ENCODE measurements at regions of chr2 and their contacts with region 1.

Region 1: GRCh38 chr2:191165176-191165643 is 14.4 kb upstream of the STAT4 start:
- DNase-seq: peak; percentile 80
- ATAC-seq: peak; percentile 12; the same call in 1 of the 2 replicates
- H3K4me3 ChIP-seq: no peak overlapping the region
- H3K27ac ChIP-seq: peak overlapping the region; percentile 90; the same call in 1 of the 2 replicates
- H3K4me1 ChIP-seq: peaks cover 51% of the 10 kb centered on the region
- H3K27me3 ChIP-seq: no peaks in the 10 kb centered on the region
- CTCF ChIP-seq: peak; percentile 94

Region 2: GRCh38 chr2:191109888-191110287 is 55.3 kb before region 1 on chr2:
- CTCF ChIA-PET with region 1: no interaction called
- POLR2A ChIA-PET with region 1: no interaction called
- intact Hi-C with region 1: no loop called
- DNase-seq: no peak
- ATAC-seq: no peak
- H3K4me3 ChIP-seq: no peak overlapping the region
- H3K27ac ChIP-seq: no peak overlapping the region
- H3K4me1 ChIP-seq: no peaks in the 10 kb centered on the region
- H3K27me3 ChIP-seq: no peaks in the 10 kb centered on the region
- CTCF ChIP-seq: no peak

Region 3: DNA sequence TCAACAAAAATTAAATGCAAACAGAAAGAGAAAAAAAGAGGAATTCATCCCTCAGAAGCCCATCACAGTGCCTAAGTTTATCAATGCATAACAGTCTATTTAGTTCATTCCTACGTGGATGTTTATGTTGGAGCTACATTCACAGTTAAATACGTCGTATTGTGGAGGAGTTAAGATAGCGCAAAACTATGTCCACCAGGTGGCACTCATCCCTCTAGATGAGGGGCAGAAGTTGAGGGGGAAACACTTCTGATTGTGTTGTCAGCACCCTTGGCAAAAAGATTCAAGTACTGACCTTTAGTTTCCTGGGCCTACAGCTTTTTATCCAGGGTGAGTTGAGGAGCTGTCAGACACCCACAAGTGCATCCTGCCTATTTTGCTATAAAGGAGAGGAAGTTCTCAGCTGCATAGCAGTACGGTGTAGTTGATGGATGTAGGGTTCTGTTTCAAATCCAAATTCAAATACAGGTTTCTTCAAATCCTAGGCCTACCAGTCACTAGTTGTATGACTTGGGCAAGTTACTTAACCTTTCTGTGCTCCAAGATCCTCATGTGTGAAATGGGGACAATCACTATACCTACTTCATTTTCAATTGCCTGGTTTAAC is 53.2 kb after region 1 on chr2:
- CTCF ChIA-PET with region 1: interaction called, 5 read pairs
- POLR2A ChIA-PET with region 1: interaction called, 10 read pairs
- intact Hi-C with region 1: loop called (anchors 1 kb)
- DNase-seq: peak; percentile 85
- ATAC-seq: peak; percentile 17; the same call in 1 of the 2 replicates
- H3K4me3 ChIP-seq: peak overlapping the region; percentile 15; the same call in 1 of the 2 replicates
- H3K27ac ChIP-seq: peak overlapping the region; percentile 84
- H3K4me1 ChIP-seq: peaks cover 49% of the 10 kb centered on the region
- H3K27me3 ChIP-seq: no peaks in the 10 kb centered on the region
- CTCF ChIP-seq: peak; percentile 88

Region 4: DNA sequence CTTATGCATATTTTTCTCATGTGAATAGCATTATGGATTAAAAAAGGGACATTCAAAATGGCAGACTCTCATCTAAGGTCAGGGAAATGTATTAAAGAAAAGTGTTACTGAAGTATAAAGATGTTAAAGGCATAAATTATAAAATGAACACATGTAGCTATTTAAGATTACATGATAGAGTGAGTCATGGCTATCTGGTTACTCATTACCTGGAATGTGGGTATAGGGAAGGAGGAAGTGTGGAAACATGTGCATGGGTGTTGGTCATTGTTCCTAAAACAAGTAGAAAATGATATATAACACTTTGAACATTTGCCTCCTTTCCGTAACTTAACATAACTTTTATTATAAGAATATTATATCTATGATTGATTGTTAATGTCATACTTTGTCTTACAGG is 146.4 kb after region 1 on chr2:
- CTCF ChIA-PET with region 1: no interaction called
- POLR2A ChIA-PET with region 1: no interaction called
- intact Hi-C with region 1: loop called (anchors 5 kb)
- DNase-seq: peak; percentile 86
- ATAC-seq: peak; percentile 93
- H3K4me3 ChIP-seq: no peak overlapping the region
- H3K27ac ChIP-seq: peak overlapping the region; percentile 25
- H3K4me1 ChIP-seq: peaks cover 25% of the 10 kb centered on the region
- H3K27me3 ChIP-seq: no peaks in the 10 kb centered on the region
- CTCF ChIP-seq: no peak

Region 5: DNA sequence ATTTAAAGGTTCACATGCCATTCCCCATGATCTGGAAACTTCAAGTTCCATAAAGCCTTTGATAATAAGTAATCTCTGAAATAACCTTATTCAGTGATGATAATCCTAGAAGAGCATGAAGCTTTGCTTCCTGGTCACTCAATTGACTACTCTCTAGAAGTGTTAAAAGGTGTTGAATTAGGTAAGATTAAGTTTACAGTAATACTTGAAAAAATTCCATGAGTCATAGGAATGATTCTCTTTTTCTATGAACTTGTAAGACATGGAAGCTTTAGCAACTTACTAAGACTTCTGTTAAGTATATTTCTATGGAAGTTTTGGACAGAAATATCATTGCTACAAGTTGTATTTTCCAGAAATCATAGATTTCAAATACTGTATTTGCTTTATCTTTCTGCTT is 180.6 kb after region 1 on chr2:
- CTCF ChIA-PET with region 1: no interaction called
- POLR2A ChIA-PET with region 1: no interaction called
- intact Hi-C with region 1: no loop called
- DNase-seq: peak; percentile 50
- ATAC-seq: peak; percentile 38; the same call in 1 of the 2 replicates
- H3K4me3 ChIP-seq: no peak overlapping the region
- H3K27ac ChIP-seq: no peak overlapping the region
- H3K4me1 ChIP-seq: peaks cover 8% of the 10 kb centered on the region; the same call in 1 of the 2 replicates
- H3K27me3 ChIP-seq: no peaks in the 10 kb centered on the region
- CTCF ChIP-seq: no peak

Region 6: GRCh38 chr2:191382801-191383200 is 217.6 kb after region 1 on chr2:
- CTCF ChIA-PET with region 1: no interaction called
- POLR2A ChIA-PET with region 1: no interaction called
- intact Hi-C with region 1: loop called (anchors 1 kb)
- DNase-seq: peak; percentile 95
- ATAC-seq: peak; percentile 83
- H3K4me3 ChIP-seq: no peak overlapping the region
- H3K27ac ChIP-seq: peak overlapping the region; percentile 73
- H3K4me1 ChIP-seq: peaks cover 43% of the 10 kb centered on the region
- H3K27me3 ChIP-seq: no peaks in the 10 kb centered on the region
- CTCF ChIP-seq: no peak

Region 7: GRCh38 chr2:191410646-191411436 is 245.6 kb after region 1 on chr2:
- CTCF ChIA-PET with region 1: no interaction called
- POLR2A ChIA-PET with region 1: interaction called, 5 read pairs
- intact Hi-C with region 1: loop called (anchors 2 kb)
- DNase-seq: peak; percentile 14
- ATAC-seq: peak; percentile 78
- H3K4me3 ChIP-seq: no peak overlapping the region
- H3K27ac ChIP-seq: peak overlapping the region; percentile 53
- H3K4me1 ChIP-seq: peaks cover 10% of the 10 kb centered on the region
- H3K27me3 ChIP-seq: no peaks in the 10 kb centered on the region
- CTCF ChIP-seq: no peak

Region 8: GRCh38 chr2:191521608-191522208 is 356.5 kb after region 1 on chr2:
- CTCF ChIA-PET with region 1: interaction called, 6 read pairs
- POLR2A ChIA-PET with region 1: no interaction called
- intact Hi-C with region 1: loop called (anchors 1 kb)
- DNase-seq: peak; percentile 65
- ATAC-seq: no peak
- H3K4me3 ChIP-seq: no peak overlapping the region
- H3K27ac ChIP-seq: no peak overlapping the region
- H3K4me1 ChIP-seq: no peaks in the 10 kb centered on the region
- H3K27me3 ChIP-seq: no peaks in the 10 kb centered on the region
- CTCF ChIP-seq: peak; percentile 84

Measured in PC-3 (cell line).